Activated T-helper 1 cell treated with anti-CD3 and anti-CD28 coated beads, Interleukin-12 subunit alpha, Interleukin-12 subunit beta, Interleukin-2, Interleukin-4 antibody, amounts not matched to agents 30 ng/mL and 10 ng/mL and 1 ng/mL, durations not matched to agents 14 hours and 24 hours and 36 hours (primary cell): ENCODE measurements at regions of chr16 and their contacts with region 1.

Region 1: GRCh38 chr16:51093726-51094280 is 57.3 kb downstream of the SALL1 start:
- DNase-seq: no peak
- H3K4me3 Mint-ChIP-seq: no peak overlapping the region
- H3K27ac Mint-ChIP-seq: no peak overlapping the region
- H3K4me1 Mint-ChIP-seq: no peaks in the 10 kb centered on the region
- H3K27me3 Mint-ChIP-seq: peaks cover 3% of the 10 kb centered on the region

Region 2: DNA sequence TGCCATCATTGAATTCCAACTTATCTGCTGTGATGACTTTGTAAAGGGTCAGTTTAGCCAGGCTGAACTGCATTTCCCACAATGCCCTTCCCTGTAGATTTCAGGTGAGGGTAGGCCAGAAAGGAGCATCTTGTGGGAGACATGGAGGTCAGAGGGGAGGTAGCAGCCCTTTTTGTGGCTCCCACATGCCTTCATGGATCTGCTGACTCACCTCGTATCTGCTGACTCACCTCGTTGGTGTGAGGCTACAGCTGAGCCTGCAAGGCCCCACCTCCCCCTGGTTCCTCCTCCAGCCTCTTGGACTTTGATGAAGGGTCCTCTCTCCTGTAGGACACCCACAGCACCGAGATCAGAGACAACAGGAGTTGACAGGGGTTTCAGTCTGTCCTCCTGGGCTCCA is 45.3 kb before region 1 on chr16:
- intact Hi-C with region 1: loop called (anchors 2 kb)
- DNase-seq: no peak
- H3K4me3 Mint-ChIP-seq: no peak overlapping the region
- H3K27ac Mint-ChIP-seq: no peak overlapping the region
- H3K4me1 Mint-ChIP-seq: peaks cover 22% of the 10 kb centered on the region
- H3K27me3 Mint-ChIP-seq: no peaks in the 10 kb centered on the region